CD8-positive, alpha-beta T cell (primary cell): ENCODE measurements at regions of chr14 and their contacts with region 1.

Region 1: DNA sequence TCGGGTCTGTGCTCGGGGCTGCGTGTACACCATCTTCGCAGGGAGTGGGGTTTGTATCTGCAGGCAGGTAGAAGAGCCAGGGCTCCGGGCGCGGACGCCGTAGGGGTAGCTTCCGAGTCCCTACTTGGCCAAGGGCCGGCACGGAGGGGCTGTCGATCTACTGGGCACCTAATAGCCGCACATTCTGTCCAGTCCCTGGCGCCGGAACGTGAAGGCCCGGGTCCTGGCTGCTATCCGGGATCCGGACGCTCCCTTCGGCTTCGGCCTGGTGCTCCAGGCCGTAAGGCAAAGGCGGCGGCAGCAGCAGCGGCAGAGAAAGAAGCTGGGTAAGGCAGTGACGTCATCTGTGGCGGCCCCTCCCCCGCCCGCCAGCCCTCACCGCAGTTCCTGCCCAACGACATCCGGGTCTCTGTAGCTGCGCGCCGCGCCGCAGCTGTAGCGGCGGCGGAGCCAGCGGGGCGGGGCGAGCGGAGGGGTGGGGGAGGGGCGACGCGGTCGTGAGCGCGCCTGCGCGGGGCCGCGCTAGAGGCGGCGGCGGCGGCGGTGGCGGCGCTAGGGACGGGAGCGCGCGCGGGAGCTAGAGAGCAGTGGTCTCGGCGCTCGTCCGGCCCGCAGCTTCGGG is at the start of gene PPM1A:
- DNase-seq: peak; percentile 93 to 99 (median 96)
- ATAC-seq: peak; percentile 76
- H3K4me3 ChIP-seq: peak within 1 kb of the TSS; percentile 92
- H3K4me3 Mint-ChIP-seq: peak within 1 kb of the TSS; percentile 93
- H3K27ac ChIP-seq: peak within 1 kb of the TSS; percentile 99 to 100
- H3K27ac Mint-ChIP-seq: peak within 1 kb of the TSS; percentile 100
- H3K4me1 ChIP-seq: peaks cover 41% of the 10 kb centered on the region
- H3K4me1 Mint-ChIP-seq: peaks cover 48% of the 10 kb centered on the region
- H3K27me3 ChIP-seq: no peaks in the 10 kb centered on the region
- H3K27me3 Mint-ChIP-seq: no peaks in the 10 kb centered on the region
- CTCF ChIP-seq: no peak
- total RNA-seq, gene PPM1A: 114 to 115 TPM

Region 2: GRCh38 chr14:59483900-59484638 is 764.7 kb before region 1 on chr14 and contains the starts of genes JKAMP and L3HYPDH:
- CTCF ChIA-PET with region 1: no interaction called
- POLR2A ChIA-PET with region 1: interaction called, 5 read pairs
- intact Hi-C with region 1: loop called (anchors 2 to 5 kb)
- DNase-seq: peak; percentile 93 to 99 (median 97)
- ATAC-seq: peak; percentile 95
- H3K4me3 ChIP-seq: peak within 1 kb of the TSS; percentile 94 to 99
- H3K4me3 Mint-ChIP-seq: peak within 1 kb of the TSS; percentile 96
- H3K27ac ChIP-seq: peak within 1 kb of the TSS; percentile 77 to 89
- H3K27ac Mint-ChIP-seq: peak within 1 kb of the TSS; percentile 88
- H3K4me1 ChIP-seq: peaks cover 46% of the 10 kb centered on the region
- H3K4me1 Mint-ChIP-seq: peaks cover 76% of the 10 kb centered on the region
- H3K27me3 ChIP-seq: no peaks in the 10 kb centered on the region
- H3K27me3 Mint-ChIP-seq: no peaks in the 10 kb centered on the region
- CTCF ChIP-seq: no peak
- total RNA-seq, gene JKAMP: 9.1 to 10.5 TPM
- total RNA-seq, gene L3HYPDH: 8.4 to 8.7 TPM

Region 3: DNA sequence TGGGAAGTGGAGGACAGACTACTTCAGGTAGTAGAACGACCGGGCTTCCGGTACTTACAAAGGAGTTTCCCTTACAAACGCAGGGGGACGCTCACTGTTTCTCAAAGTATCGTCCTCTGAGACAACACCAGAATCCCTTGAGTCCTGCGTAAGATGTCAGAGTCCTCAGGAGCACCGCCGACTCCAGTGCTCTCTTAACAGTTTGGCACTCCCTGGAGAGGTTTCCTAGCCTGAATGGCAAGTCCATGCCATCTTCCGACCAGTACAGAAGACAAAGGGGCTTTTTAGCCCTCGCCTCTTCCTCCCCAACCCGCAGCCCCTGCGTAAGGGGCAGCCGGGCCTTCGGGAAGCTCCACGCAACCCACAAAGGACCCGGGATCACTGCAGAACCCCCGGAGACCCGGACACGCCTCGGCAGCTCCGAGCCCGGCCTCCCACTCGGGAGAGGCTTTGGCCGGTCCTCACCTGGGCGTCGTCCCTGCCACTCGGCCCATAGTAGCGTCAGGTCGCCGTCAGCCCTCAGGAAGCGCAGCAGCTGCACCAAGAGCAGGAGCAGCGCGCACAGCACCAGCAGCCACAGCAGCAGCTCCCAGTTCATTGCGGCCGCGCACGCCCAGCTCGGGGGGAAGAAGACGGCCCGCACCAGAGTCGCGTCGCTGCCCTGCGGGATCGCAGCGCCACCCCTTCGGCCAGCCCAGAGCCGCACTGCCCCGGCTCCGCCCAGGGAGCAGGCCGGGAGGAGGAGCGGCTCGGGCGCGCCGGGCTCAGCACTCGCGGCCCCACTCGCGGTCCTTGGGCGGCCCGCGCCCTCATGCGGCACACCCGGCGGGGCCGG is 83.9 kb before region 1 on chr14 and contains the start of gene DHRS7:
- CTCF ChIA-PET with region 1: interaction called, 12 read pairs
- POLR2A ChIA-PET with region 1: interaction called, 42 read pairs
- intact Hi-C with region 1: loop called in 1 of 2 experiments (anchors 1 kb)
- DNase-seq: peak; percentile 28 to 89 (median 62)
- ATAC-seq: peak; percentile 70
- H3K4me3 ChIP-seq: peak within 1 kb of the TSS; percentile 68 to 88
- H3K4me3 Mint-ChIP-seq: peak within 1 kb of the TSS; percentile 99
- H3K27ac ChIP-seq: peak within 1 kb of the TSS; percentile 82 to 95
- H3K27ac Mint-ChIP-seq: peak within 1 kb of the TSS; percentile 100
- H3K4me1 ChIP-seq: peaks cover 31% of the 10 kb centered on the region
- H3K4me1 Mint-ChIP-seq: peaks cover 52% of the 10 kb centered on the region
- H3K27me3 ChIP-seq: no peaks in the 10 kb centered on the region
- H3K27me3 Mint-ChIP-seq: no peaks in the 10 kb centered on the region
- CTCF ChIP-seq: no peak
- total RNA-seq, gene DHRS7: 26.6 to 27.6 TPM

Region 4: DNA sequence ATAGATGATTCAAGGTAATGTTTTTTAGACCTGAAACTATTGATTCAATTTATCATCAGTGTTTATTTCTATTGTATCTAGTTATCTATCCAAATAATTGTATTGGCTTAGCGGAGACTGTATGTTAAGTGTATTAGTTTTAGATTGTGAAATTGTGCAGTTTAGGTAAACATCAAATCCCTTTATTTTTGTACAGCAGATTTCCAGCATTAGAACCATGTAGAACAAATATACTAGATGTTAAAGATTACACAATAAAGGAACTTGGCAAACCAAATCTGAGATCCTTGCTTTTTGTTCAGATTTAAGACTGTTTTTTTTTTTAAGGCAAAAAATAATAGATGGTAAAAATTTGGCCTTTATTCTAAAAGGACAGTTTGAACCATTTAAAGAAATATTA is 39.5 kb after region 1 on chr14:
- CTCF ChIA-PET with region 1: no interaction called
- POLR2A ChIA-PET with region 1: no interaction called
- intact Hi-C with region 1: loop called in 1 of 2 experiments (anchors 5 kb)
- DNase-seq: no peak
- ATAC-seq: no peak
- H3K4me3 ChIP-seq: no peak overlapping the region
- H3K4me3 Mint-ChIP-seq: no peak overlapping the region
- H3K27ac ChIP-seq: no peak overlapping the region
- H3K27ac Mint-ChIP-seq: no peak overlapping the region
- H3K4me1 ChIP-seq: no peaks in the 10 kb centered on the region
- H3K4me1 Mint-ChIP-seq: no peaks in the 10 kb centered on the region
- H3K27me3 ChIP-seq: no peaks in the 10 kb centered on the region
- H3K27me3 Mint-ChIP-seq: no peaks in the 10 kb centered on the region
- CTCF ChIP-seq: no peak

Region 5: DNA sequence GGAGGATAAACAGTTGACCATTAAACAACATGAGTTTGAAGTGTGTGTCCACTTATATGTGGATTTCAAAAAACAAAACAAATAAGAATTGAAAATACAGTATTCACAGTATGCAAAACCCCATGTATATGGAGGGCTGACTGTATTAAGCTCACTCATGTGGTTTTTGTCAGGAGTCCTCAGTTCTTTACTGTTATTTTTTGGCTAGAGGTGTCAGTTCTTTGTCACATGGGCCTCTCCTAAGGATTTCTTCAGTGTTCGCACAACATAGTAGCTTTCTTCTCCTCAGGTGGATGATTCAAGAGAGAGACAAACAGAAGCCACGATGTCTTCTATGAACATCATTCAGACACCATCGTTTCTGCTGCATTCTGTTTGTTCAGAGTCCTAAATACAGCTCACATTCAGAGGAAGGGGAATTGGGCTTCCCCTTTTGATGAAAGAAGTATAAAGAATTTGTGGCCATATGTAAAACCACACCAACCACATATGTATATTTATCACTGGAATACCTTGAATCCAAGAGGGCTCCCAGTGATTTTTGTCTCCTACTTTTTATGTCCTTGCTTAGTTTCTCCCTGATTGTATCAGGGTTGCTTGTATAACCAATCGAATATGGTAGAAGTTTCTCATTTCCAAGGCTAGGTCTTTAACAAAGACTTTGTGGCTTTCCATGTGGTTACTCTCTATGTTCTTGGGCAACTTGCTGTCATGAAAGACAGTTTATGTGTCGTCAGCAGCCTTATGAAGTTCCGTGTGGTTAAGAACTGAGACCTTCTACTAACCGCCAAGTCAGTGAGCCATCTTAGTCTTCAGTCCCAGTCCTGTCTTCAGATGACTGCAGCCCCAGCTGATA is 504.7 kb after region 1 on chr14:
- CTCF ChIA-PET with region 1: no interaction called
- POLR2A ChIA-PET with region 1: no interaction called
- intact Hi-C with region 1: loop called in 1 of 2 experiments (anchors 10 kb)
- DNase-seq: peak; percentile 17 to 95 (median 55)
- ATAC-seq: peak; percentile 90
- H3K4me3 ChIP-seq: peak overlapping the region in 1 of 2 experiments; percentile 6
- H3K4me3 Mint-ChIP-seq: peak overlapping the region; percentile 64
- H3K27ac ChIP-seq: peak overlapping the region in 1 of 2 experiments; percentile 48
- H3K27ac Mint-ChIP-seq: peak overlapping the region; percentile 82
- H3K4me1 ChIP-seq: peaks cover 22% of the 10 kb centered on the region
- H3K4me1 Mint-ChIP-seq: peaks cover 38% of the 10 kb centered on the region
- H3K27me3 ChIP-seq: no peaks in the 10 kb centered on the region
- H3K27me3 Mint-ChIP-seq: peaks cover 4% of the 10 kb centered on the region
- CTCF ChIP-seq: no peak

Region 6: DNA sequence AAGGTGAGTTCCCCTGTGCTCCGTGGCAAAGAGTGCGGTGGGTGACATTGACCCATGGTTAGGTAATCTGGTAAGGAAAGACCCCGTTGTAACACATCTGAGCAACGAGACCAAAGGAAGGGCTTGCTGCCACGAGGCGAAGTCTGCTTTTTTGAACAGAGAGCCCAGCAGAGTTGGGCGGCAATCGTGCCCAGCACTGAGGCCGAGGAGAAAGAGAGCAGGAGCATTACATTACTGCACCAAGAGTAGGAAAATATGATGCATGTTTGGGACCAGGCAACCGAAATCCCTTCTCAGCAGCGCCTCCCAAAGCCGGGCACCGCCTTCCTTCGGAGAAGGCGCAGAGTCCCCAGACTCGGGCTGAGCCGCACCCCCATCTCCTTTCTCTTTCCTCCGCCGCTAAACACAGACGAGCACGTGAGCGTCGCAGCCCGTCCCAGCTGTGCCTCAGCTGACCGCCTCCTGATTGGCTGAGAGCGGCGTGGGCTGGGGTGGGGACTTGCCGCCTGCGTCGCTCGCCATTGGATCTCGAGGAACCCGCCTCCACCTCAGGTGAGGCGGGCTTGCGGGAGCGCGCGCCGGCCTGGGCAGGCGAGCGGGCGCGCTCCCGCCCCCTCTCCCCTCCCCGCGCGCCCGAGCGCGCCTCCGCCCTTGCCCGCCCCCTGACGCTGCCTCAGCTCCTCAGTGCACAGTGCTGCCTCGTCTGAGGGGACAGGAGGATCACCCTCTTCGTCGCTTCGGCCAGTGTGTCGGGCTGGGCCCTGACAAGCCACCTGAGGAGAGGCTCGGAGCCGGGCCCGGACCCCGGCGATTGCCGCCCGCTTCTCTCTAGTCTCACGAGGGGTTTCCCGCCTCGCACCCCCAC is 1446.3 kb after region 1 on chr14 and contains the start of gene HIF1A:
- CTCF ChIA-PET with region 1: no interaction called
- POLR2A ChIA-PET with region 1: no interaction called
- intact Hi-C with region 1: loop called (anchors 2 to 5 kb)
- DNase-seq: peak; percentile 88 to 100 (median 94)
- ATAC-seq: peak; percentile 95
- H3K4me3 ChIP-seq: peak within 1 kb of the TSS; percentile 76 to 87
- H3K4me3 Mint-ChIP-seq: peak within 1 kb of the TSS; percentile 95
- H3K27ac ChIP-seq: peak within 1 kb of the TSS; percentile 83 to 86
- H3K27ac Mint-ChIP-seq: peak within 1 kb of the TSS; percentile 96
- H3K4me1 ChIP-seq: peaks cover 47% of the 10 kb centered on the region
- H3K4me1 Mint-ChIP-seq: peaks cover 59% of the 10 kb centered on the region
- H3K27me3 ChIP-seq: no peaks in the 10 kb centered on the region
- H3K27me3 Mint-ChIP-seq: no peaks in the 10 kb centered on the region
- CTCF ChIP-seq: no peak
- total RNA-seq, gene HIF1A: 335 to 340 TPM